Psoas muscle (tissue), 8 donors: ENCODE measurements at regions of chr15 and their contacts with region 1.

Region 1: DNA sequence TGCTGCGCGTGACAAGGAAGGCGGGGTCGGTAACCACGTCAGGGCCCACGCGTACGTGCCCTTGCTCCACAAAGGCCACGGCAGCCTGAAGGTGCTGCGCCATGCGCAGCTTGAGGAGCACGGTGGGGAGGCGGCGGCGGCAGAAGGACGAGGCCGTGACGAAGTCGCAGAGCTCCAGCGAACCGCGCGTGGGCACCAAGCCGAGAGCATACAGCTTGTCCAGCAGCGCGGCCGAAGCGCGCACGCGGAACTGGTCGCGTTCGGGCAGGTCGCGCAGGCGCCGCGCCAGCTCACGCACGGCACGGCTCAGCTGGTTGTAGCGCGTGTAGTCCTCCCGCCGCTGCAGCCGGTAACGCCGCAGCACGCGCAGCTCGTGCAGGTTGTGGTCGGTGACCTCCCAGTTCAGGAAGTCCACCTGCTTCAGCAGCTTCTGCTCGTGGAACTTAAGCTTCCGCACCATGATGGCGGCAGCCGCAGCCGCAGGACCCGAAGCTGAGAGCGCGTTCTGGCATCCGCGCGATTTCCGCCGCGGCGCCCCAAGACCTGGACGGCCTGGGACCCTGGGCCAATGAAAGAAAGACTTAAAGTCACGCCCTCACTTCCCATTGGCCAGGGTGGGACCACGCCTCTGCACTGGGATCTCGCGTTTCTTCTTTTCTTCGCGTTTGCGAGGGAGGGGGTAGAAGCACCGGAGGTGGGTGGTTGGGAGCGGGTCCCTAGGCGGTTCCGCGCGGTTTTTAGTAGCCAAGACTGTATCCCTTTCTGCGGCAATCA is at the start of gene IMP3:
- DNase-seq: peak; percentile 94 to 97
- ATAC-seq: peak; percentile 94 to 98 (median 96)
- H3K4me3 ChIP-seq: peak within 1 kb of the TSS; percentile 94
- H3K27ac ChIP-seq: peak within 1 kb of the TSS; percentile 96
- H3K4me1 ChIP-seq: peaks cover 23% of the 10 kb centered on the region
- H3K27me3 ChIP-seq: no peaks in the 10 kb centered on the region
- CTCF ChIP-seq: no peak
- total RNA-seq, gene IMP3: 41.6 to 51.0 (median 43.8) TPM

Region 2: DNA sequence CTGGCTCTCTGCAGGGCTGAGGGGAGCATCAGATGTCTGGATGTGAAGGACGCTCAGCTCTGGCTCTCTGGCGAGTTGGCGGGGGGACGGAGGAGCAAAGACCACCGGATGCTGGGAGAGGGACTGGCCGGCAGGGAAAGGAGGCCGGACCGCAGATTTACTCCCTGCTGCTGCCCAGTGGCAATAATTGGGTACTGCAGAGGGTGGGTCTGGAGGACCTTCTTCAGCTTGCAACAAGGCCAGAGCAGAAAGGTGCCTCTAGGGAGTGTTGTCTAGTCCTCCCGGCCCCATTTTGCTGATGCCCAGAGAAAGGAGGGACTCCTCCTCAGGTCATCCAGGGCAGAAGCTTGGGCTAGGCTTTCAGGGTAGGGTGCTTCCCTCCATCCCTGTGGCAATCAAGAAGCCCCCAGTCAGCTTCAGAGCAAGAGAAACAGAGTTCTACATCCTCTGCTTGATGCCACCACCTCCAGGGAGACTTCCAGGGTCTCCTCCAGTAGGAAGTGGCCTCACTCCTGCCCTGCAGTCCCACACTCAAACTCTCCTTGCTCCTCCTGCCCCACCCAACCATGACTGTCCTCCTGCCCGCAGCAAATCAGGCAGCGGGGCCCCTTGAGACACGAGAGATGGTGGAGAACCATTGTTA is 93.0 kb after region 1 on chr15:
- intact Hi-C with region 1: loop called in 1 of 2 experiments (anchors 5 kb)
- DNase-seq: peak; percentile 75 to 82
- ATAC-seq: peak; percentile 76 to 88 (median 83)
- H3K4me3 ChIP-seq: no peak overlapping the region
- H3K27ac ChIP-seq: no peak overlapping the region
- H3K4me1 ChIP-seq: no peaks in the 10 kb centered on the region
- H3K27me3 ChIP-seq: no peaks in the 10 kb centered on the region
- CTCF ChIP-seq: peak; percentile 87